ENCODE measurements at regions of chr6 and their contacts with region 1.

Region 1: DNA sequence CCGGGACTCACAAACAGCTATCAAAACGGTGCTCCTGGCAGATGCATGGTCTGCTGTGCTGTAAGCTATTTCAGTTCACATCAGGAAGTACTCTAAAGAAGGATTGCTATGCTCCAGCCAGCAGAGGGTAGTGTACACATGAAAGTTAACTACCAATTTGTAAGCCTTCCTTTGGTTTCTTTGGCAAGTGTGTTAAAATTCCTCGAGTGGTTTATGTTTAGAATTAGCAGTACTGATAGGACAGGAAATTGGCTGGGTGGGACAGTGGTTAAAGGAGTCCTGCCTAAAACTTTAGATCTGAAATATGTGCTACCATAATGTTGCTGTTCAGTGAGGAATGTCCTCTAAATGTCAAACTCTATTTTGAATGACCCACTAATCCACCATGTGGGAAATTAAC is 47.4 kb downstream of the TRMT11 start:
- DNase-seq: peak; percentile 73
- H3K4me3 ChIP-seq: no peak overlapping the region
- H3K27ac ChIP-seq: no peak overlapping the region
- H3K27me3 ChIP-seq: no peaks in the 10 kb centered on the region
- CTCF ChIP-seq: peak; percentile 83

Region 2: DNA sequence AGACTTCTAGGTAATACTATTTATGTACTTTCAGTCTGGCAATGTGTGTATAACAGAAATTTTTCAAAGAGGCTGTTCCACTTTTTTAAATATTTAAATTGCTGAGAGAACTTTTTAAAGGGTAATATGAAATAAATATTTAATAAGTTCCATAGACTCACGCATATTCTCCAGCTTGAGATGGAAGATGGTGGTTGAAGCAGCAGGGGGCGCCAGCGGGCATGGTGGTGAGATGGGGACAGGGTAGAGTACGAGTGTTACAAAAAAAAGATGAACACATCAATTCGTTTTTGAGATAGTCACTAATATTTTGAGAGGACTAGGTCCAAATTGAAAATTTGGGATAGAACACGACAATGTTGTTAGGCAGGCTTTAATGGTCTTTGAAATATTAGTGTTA is 1153.2 kb after region 1 on chr6:
- CTCF ChIA-PET with region 1: interaction called, 13 read pairs
- POLR2A ChIA-PET with region 1: no interaction called
- DNase-seq: no peak
- H3K4me3 ChIP-seq: no peak overlapping the region
- H3K27ac ChIP-seq: no peak overlapping the region
- H3K27me3 ChIP-seq: no peaks in the 10 kb centered on the region
- CTCF ChIP-seq: peak; percentile 50